ENCODE measurements at regions of chr20 and their contacts with region 1.

Region 1: GRCh38 chr20:48635433-48636310 is 192.1 kb downstream of the PREX1 start:
- DNase-seq: peak; percentile 42
- H3K4me3 Mint-ChIP-seq: no peak overlapping the region
- H3K27ac Mint-ChIP-seq: peak overlapping the region; percentile 70
- H3K4me1 Mint-ChIP-seq: peaks cover 11% of the 10 kb centered on the region
- H3K27me3 Mint-ChIP-seq: no peaks in the 10 kb centered on the region

Region 2: DNA sequence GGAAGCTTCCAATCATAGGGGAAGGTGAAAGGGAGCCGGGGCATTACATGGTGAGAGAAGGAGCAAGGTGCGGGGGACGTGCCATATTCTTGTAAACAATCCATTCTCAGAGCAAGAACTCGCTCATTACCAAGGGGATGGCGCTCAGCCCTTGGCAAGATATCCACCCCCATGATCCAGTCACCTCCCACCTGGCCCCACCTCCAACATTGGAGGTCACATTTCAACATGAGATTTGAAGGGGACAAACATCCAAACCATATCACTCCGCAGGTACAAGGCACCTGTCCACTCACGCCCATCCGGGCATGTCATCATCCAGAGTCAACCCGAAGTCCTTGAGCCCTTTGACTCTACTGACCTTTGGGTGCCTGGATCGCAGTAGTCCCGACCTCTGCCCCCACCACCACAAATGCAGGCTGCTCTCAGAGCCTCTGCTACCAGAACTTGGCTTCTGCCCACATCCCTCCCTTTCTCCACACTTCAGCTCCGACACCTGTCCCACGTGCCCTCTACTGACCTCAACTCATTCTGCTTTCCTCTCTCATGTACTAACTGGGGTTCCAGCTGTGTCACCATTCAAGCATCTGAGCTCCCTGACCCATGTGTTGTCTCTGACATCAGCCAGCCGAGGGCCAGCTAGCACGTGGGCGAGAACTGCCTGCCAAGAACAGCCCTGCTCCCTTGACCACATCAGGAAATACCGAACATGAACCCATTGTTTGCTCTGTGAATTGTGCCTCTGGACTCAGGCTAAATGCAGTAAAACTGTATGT is 352.2 kb before region 1 on chr20:
- intact Hi-C with region 1: no loop called
- DNase-seq: no peak
- H3K4me3 Mint-ChIP-seq: no peak overlapping the region
- H3K27ac Mint-ChIP-seq: no peak overlapping the region
- H3K4me1 Mint-ChIP-seq: no peaks in the 10 kb centered on the region
- H3K27me3 Mint-ChIP-seq: no peaks in the 10 kb centered on the region

Region 3: GRCh38 chr20:48679550-48680187 is 44.0 kb after region 1 on chr20:
- intact Hi-C with region 1: no loop called
- DNase-seq: no peak
- H3K4me3 Mint-ChIP-seq: no peak overlapping the region
- H3K27ac Mint-ChIP-seq: no peak overlapping the region
- H3K4me1 Mint-ChIP-seq: peaks cover 7% of the 10 kb centered on the region
- H3K27me3 Mint-ChIP-seq: no peaks in the 10 kb centered on the region

Region 4: GRCh38 chr20:48904365-48905296 is 269.0 kb after region 1 on chr20:
- intact Hi-C with region 1: loop called (anchors 1 kb)
- DNase-seq: peak; percentile 50
- H3K4me3 Mint-ChIP-seq: no peak overlapping the region
- H3K27ac Mint-ChIP-seq: no peak overlapping the region
- H3K4me1 Mint-ChIP-seq: peaks cover 16% of the 10 kb centered on the region
- H3K27me3 Mint-ChIP-seq: peaks cover 7% of the 10 kb centered on the region

Measured in activated T-helper 1 cell treated with anti-CD3 and anti-CD28 coated beads, Interleukin-12 subunit alpha, Interleukin-12 subunit beta, Interleukin-2, Interleukin-4 antibody, amounts not matched to agents 30 ng/mL and 10 ng/mL and 1 ng/mL, durations not matched to agents 14 hours and 24 hours and 36 hours (primary cell).